ENCODE measurements at regions of chr2 and their contacts with region 1.

Region 1: GRCh38 chr2:160482673-160483072 is 10.9 kb downstream of the RBMS1 start:
- DNase-seq: peak; percentile 46
- H3K4me3 Mint-ChIP-seq: peak overlapping the region; percentile 47
- H3K27ac Mint-ChIP-seq: peak overlapping the region; percentile 85
- H3K4me1 Mint-ChIP-seq: peaks cover 71% of the 10 kb centered on the region
- H3K27me3 Mint-ChIP-seq: no peaks in the 10 kb centered on the region

Region 2: GRCh38 chr2:159695795-159696448 is 786.8 kb before region 1 on chr2:
- CTCF ChIA-PET with region 1: no interaction called
- intact Hi-C with region 1: no loop called
- DNase-seq: no peak
- H3K4me3 Mint-ChIP-seq: no peak overlapping the region
- H3K27ac Mint-ChIP-seq: no peak overlapping the region
- H3K4me1 Mint-ChIP-seq: no peaks in the 10 kb centered on the region
- H3K27me3 Mint-ChIP-seq: no peaks in the 10 kb centered on the region

Region 3: GRCh38 chr2:159989249-159989648 is 493.4 kb before region 1 on chr2:
- CTCF ChIA-PET with region 1: no interaction called
- intact Hi-C with region 1: no loop called
- DNase-seq: no peak
- H3K4me3 Mint-ChIP-seq: no peak overlapping the region
- H3K27ac Mint-ChIP-seq: no peak overlapping the region
- H3K4me1 Mint-ChIP-seq: no peaks in the 10 kb centered on the region
- H3K27me3 Mint-ChIP-seq: peaks cover 26% of the 10 kb centered on the region

Region 4: DNA sequence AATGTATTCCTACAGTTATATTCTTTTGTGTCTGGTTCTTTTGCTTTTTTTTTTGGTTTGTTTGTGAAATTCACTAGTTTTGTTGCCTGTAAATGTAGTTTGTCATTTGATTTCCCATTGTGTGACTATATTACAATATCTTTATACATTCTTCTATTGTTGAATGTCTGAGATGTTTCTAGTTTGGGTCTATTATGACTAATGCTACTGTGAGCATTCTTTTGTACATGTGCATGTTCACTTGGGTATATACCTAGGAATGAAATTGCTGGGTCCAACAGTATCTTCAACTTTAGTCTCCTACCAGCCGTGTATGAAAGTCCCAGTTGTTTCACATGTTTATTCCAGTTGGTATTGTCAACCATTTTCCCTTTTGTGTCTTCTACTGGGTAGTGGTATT is 123.7 kb after region 1 on chr2:
- CTCF ChIA-PET with region 1: no interaction called
- intact Hi-C with region 1: no loop called
- DNase-seq: no peak
- H3K4me3 Mint-ChIP-seq: no peak overlapping the region
- H3K27ac Mint-ChIP-seq: no peak overlapping the region
- H3K4me1 Mint-ChIP-seq: peaks cover 35% of the 10 kb centered on the region
- H3K27me3 Mint-ChIP-seq: no peaks in the 10 kb centered on the region

Region 5: GRCh38 chr2:161238560-161239325 is 756.1 kb after region 1 on chr2:
- CTCF ChIA-PET with region 1: no interaction called
- intact Hi-C with region 1: loop called (anchors 10 kb)
- DNase-seq: peak; percentile 71
- H3K4me3 Mint-ChIP-seq: peak overlapping the region; percentile 84
- H3K27ac Mint-ChIP-seq: peak overlapping the region; percentile 47
- H3K4me1 Mint-ChIP-seq: peaks cover 47% of the 10 kb centered on the region
- H3K27me3 Mint-ChIP-seq: no peaks in the 10 kb centered on the region